ENCODE measurements at regions of chr12 and their contacts with region 1.

Region 1: DNA sequence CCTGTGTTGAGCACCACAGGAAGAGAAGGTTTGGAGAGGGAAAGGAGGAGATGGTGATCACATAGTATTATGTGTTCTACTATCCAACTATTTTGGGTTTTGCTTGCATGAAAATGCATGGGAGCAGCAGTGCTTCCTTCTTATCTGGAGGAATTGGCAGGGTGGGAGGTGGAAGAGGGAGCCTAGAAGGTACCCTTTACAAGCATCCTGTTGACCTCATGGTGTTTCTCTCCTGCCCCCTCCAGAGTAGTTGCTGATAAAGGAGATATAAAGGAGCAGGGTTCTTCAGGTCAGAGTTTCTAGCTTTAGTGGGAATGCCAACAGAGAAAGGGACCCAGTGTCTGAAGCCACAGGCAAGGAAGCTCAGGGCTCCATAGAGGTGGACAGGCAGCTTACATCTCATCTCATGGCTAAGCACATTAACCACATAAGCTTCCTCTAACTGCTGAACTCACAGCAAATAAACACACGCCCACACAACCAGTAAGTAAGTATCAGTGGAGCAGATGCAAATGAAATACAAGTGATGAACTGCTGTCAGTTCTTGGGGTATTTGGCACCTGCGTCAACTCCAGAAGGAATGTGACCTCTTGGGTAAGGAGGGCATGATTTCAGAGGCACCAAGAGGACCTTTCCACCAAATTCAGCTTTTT is 174.2 kb upstream of the SLC38A2 start:
- DNase-seq: peak; percentile 38
- H3K4me3 Mint-ChIP-seq: no peak overlapping the region
- H3K27ac Mint-ChIP-seq: peak overlapping the region; percentile 51
- H3K4me1 Mint-ChIP-seq: peaks cover 55% of the 10 kb centered on the region
- H3K27me3 Mint-ChIP-seq: no peaks in the 10 kb centered on the region

Region 2: GRCh38 chr12:46217541-46218321 is 329.0 kb before region 1 on chr12:
- CTCF ChIA-PET with region 1: no interaction called
- POLR2A ChIA-PET with region 1: no interaction called
- intact Hi-C with region 1: loop called (anchors 5 kb)
- DNase-seq: peak; percentile 75
- H3K4me3 Mint-ChIP-seq: peak overlapping the region; percentile 61
- H3K27ac Mint-ChIP-seq: peak overlapping the region; percentile 98
- H3K4me1 Mint-ChIP-seq: peaks cover 95% of the 10 kb centered on the region
- H3K27me3 Mint-ChIP-seq: no peaks in the 10 kb centered on the region

Region 3: GRCh38 chr12:46517579-46517962 is 29.2 kb before region 1 on chr12:
- CTCF ChIA-PET with region 1: interaction called, 5 read pairs
- POLR2A ChIA-PET with region 1: interaction called, 32 read pairs
- intact Hi-C with region 1: loop called (anchors 1 kb)
- DNase-seq: no peak
- H3K4me3 Mint-ChIP-seq: peak overlapping the region; percentile 21
- H3K27ac Mint-ChIP-seq: peak overlapping the region; percentile 87
- H3K4me1 Mint-ChIP-seq: peaks cover 53% of the 10 kb centered on the region
- H3K27me3 Mint-ChIP-seq: no peaks in the 10 kb centered on the region

Region 4: GRCh38 chr12:46523863-46524770 is 22.6 kb before region 1 on chr12:
- CTCF ChIA-PET with region 1: interaction called, 4 read pairs
- POLR2A ChIA-PET with region 1: interaction called, 32 read pairs
- intact Hi-C with region 1: loop called (anchors 1 kb)
- DNase-seq: peak; percentile 74
- H3K4me3 Mint-ChIP-seq: peak overlapping the region; percentile 65
- H3K27ac Mint-ChIP-seq: peak overlapping the region; percentile 90
- H3K4me1 Mint-ChIP-seq: peaks cover 30% of the 10 kb centered on the region
- H3K27me3 Mint-ChIP-seq: no peaks in the 10 kb centered on the region

Region 5: GRCh38 chr12:46661110-46661845 is 114.5 kb after region 1 on chr12:
- CTCF ChIA-PET with region 1: no interaction called
- POLR2A ChIA-PET with region 1: no interaction called
- intact Hi-C with region 1: loop called (anchors 2 kb)
- DNase-seq: no peak
- H3K4me3 Mint-ChIP-seq: no peak overlapping the region
- H3K27ac Mint-ChIP-seq: no peak overlapping the region
- H3K4me1 Mint-ChIP-seq: peaks cover 34% of the 10 kb centered on the region
- H3K27me3 Mint-ChIP-seq: no peaks in the 10 kb centered on the region

Region 6: DNA sequence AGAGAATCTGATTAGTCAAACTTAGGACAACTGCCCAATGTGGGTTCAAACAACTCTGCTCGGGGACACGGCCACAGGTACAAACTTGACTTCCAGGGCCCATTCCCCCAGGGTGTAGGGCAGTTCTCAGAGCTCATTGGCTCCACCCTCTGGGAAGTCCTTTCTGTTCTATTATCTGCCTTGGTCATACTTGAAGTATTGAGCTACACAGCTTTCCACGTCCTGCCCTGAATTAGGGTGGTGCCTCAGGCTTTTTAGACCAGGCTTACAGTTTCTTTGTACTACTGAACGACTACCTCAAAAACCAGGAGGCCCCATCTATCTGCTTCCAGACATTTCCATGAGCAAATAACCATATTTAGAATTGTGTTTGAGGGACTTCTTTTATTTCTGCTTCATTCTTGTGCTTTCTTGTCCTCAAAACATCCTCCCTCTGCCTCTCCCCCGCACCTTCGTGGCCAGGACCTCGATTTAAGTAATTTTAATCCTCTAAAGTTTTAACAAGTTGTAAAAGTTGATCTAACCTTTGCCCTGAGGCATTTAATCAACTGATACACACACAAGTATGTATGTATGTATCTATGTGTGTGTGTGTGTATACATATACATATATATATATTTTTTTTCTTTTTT is 814.7 kb after region 1 on chr12:
- CTCF ChIA-PET with region 1: no interaction called
- POLR2A ChIA-PET with region 1: no interaction called
- intact Hi-C with region 1: loop called (anchors 10 kb)
- DNase-seq: peak; percentile 73
- H3K4me3 Mint-ChIP-seq: peak overlapping the region; percentile 66
- H3K27ac Mint-ChIP-seq: peak overlapping the region; percentile 99
- H3K4me1 Mint-ChIP-seq: peaks cover 60% of the 10 kb centered on the region
- H3K27me3 Mint-ChIP-seq: no peaks in the 10 kb centered on the region

Measured in activated CD4-positive, alpha-beta memory T cell treated with anti-CD3 and anti-CD28 coated beads for 36 hours (primary cell).